A549 (cell line): ENCODE measurements at regions of chr19 and their contacts with region 1.

Region 1: GRCh38 chr19:16041299-16041990 is 34.9 kb upstream of the TPM4 start:
- DNase-seq: peak; percentile 59 to 79
- ATAC-seq: peak; percentile 82 to 95
- H3K4me3 ChIP-seq: 0 out of 3 replicates have a peak overlapping the region, but pooled peaks have one; percentile 26
- H3K27ac ChIP-seq: peak overlapping the region; percentile 58 to 70
- H3K4me1 ChIP-seq: peaks cover 10% of the 10 kb centered on the region
- CTCF ChIP-seq: peak; percentile 84
- EP300 ChIP-seq: no peak
- POLR2A ChIP-seq: no peak
- RAD21 ChIP-seq: peak; percentile 89 to 90

Region 2: DNA sequence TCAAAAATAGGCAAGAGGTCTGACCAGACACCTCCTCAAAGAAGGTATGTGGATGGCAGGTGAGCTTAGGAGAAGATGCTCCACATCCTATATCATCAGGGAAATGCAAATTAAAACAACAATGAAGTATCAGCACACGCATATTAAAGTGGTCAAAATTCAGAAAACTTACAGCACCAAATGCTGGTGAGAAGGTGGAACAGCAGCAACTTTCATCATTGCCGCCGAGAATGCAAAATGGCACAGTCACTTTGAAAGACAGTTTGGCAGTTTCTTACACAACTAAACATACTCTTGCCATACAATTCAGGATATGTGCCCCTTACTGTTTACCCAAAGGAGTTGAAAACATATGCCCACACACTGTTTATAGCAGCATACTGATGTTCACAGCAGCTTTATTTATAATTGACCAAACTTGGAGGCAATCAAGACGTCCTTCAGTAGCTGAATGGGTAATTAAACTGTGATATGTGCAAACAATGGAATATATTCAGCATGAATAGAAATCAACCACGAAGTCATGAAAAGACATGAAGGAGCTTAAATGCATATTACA is 70.1 kb before region 1 on chr19:
- CTCF ChIA-PET with region 1: no interaction called
- POLR2A ChIA-PET with region 1: no interaction called
- DNase-seq: no peak
- ATAC-seq: no peak
- H3K4me3 ChIP-seq: no peak overlapping the region
- H3K27ac ChIP-seq: no peak overlapping the region
- H3K4me1 ChIP-seq: no peaks in the 10 kb centered on the region
- CTCF ChIP-seq: no peak
- EP300 ChIP-seq: no peak
- POLR2A ChIP-seq: no peak
- RAD21 ChIP-seq: no peak

Region 3: GRCh38 chr19:16057062-16057461 is 15.6 kb after region 1 on chr19:
- CTCF ChIA-PET with region 1: interaction called, 38 read pairs
- POLR2A ChIA-PET with region 1: no interaction called
- DNase-seq: no peak
- ATAC-seq: no peak
- H3K4me3 ChIP-seq: no peak overlapping the region
- H3K27ac ChIP-seq: no peak overlapping the region
- H3K4me1 ChIP-seq: no peaks in the 10 kb centered on the region
- CTCF ChIP-seq: no peak
- EP300 ChIP-seq: no peak
- POLR2A ChIP-seq: no peak
- RAD21 ChIP-seq: no peak

Region 4: GRCh38 chr19:16076154-16076957 is 34.9 kb after region 1 on chr19 and contains the start of gene TPM4:
- CTCF ChIA-PET with region 1: interaction called, 36 read pairs
- POLR2A ChIA-PET with region 1: no interaction called
- DNase-seq: peak; percentile 65 to 93
- ATAC-seq: peak; percentile 78 to 87
- H3K4me3 ChIP-seq: peak within 1 kb of the TSS; percentile 99
- H3K27ac ChIP-seq: peak within 1 kb of the TSS; percentile 100
- H3K4me1 ChIP-seq: peaks cover 44% of the 10 kb centered on the region
- CTCF ChIP-seq: no peak
- EP300 ChIP-seq: 0 out of 5 replicates have a peak, but pooled peaks of 1 of the 2 experiments have one; percentile 14
- POLR2A ChIP-seq: peak; percentile 52
- RAD21 ChIP-seq: no peak
- polyA plus RNA-seq, gene TPM4: 474 and 777 TPM in 2 replicates

Region 5: GRCh38 chr19:16111160-16111908 is 69.9 kb after region 1 on chr19 and contains the start of gene RAB8A:
- CTCF ChIA-PET with region 1: interaction called, 21 read pairs
- POLR2A ChIA-PET with region 1: no interaction called
- DNase-seq: peak; percentile 93 to 98
- ATAC-seq: peak; percentile 95 to 96
- H3K4me3 ChIP-seq: peak within 1 kb of the TSS; percentile 99
- H3K27ac ChIP-seq: peak within 1 kb of the TSS; percentile 96 to 98
- H3K4me1 ChIP-seq: peaks cover 20% of the 10 kb centered on the region
- CTCF ChIP-seq: peak; percentile 69
- EP300 ChIP-seq: no peak
- POLR2A ChIP-seq: peak; percentile 50
- RAD21 ChIP-seq: peak; percentile 52 to 73
- polyA plus RNA-seq, gene RAB8A: 69.4 and 91.4 TPM in 2 replicates

Region 6: GRCh38 chr19:16185123-16185767 is 143.8 kb after region 1 on chr19 and contains the start of gene FAM32A:
- CTCF ChIA-PET with region 1: interaction called, 28 read pairs
- POLR2A ChIA-PET with region 1: interaction called, 4 read pairs
- DNase-seq: peak; percentile 98 to 99
- ATAC-seq: peak; percentile 94
- H3K4me3 ChIP-seq: peak within 1 kb of the TSS; percentile 96
- H3K27ac ChIP-seq: peak within 1 kb of the TSS; percentile 89 to 95
- H3K4me1 ChIP-seq: 0 out of 3 replicates have a peak, but pooled peaks cover 4% of the 10 kb centered on the region
- CTCF ChIP-seq: no peak
- EP300 ChIP-seq: no peak
- POLR2A ChIP-seq: no peak
- RAD21 ChIP-seq: no peak
- polyA plus RNA-seq, gene FAM32A: 97.6 and 108 TPM in 2 replicates